ENCODE measurements at regions of chr7 and their contacts with region 1.

Region 1: DNA sequence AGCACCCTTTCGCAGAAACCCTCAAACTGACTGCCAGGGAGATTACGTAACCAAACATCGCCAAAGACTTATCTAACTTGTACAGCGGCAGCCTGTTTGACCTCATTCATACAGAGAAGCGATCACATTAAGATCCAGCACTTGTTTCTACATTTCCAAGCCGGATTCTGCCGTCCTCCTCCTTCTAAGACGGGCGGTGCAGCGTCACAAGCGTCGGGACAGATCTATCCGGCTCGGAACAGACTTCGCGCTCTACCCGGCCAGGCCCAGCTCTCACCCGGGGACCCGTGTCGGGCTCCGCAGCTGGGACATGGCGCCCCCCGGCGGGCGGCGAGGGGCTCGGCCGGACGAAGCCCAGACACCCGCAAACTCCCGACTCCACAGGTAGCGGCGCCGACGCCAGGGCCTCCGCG is 373 bp downstream of the H2AZ2 start:
- DNase-seq: peak; percentile 89 to 94 (median 94)
- ATAC-seq: peak; percentile 84
- H3K4me3 ChIP-seq: peak overlapping the region; percentile 61
- H3K4me1 ChIP-seq: peaks cover 8% of the 10 kb centered on the region
- CTCF ChIP-seq: peak; percentile 81

Region 2: DNA sequence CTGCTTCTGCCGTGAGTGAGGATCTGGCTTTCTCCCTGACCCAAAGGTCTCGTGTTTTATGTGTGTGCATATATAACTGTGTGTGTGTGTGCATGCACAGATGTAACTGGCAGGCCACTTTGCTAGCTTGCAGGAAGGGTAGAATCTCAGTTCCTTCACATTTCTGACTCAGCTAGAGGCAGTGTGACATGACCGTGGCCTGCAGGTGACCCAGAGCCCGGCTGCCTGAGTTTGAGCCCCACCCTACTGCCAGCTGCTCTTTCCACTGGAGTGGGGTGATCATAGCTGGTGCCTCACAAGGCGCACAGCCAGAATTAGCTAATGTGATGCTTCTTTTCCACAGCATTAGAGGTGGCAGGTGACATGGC is 697.1 kb before region 1 on chr7:
- intact Hi-C with region 1: no loop called
- DNase-seq: no peak
- ATAC-seq: no peak
- H3K4me3 ChIP-seq: no peak overlapping the region
- H3K4me1 ChIP-seq: no peaks in the 10 kb centered on the region
- CTCF ChIP-seq: no peak

Region 3: DNA sequence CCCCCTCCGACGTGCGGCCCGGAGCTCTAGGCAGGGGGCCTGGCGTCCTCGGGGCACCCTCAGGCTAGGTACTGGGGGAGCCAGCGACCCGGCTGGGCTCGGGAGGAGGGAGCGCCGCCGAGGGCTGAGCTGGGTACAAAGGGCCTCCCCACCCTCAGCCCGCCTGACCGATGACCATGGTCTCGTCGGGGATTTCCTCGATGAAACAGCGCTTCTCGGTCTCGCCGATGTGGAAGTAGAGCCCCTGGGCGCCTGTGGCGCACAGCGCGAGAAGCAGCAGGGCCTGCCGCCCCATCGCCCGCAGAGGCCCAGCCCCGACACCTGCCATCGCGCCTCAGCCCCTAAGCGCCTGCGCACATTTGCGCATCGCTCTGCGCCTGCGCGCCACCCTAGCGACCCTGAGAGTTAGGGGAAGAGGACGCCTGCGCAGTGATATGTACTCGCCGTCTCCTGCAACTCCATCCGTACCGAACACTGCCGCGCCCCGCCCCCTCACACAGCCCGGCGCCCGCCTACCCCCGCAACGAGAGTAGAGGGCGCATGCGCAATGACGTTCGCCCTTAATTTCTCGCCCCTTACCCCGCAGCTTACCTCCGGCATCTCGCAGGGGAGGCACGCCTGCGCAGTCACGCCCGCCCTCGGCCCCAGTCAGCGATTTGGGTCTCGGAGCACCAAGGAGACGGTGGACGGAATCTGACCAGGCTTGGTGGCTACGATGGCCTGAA is 265.5 kb before region 1 on chr7 and contains the start of gene TMED4:
- intact Hi-C with region 1: loop called in 1 of 2 experiments (anchors 10 kb)
- DNase-seq: peak; percentile 100
- ATAC-seq: peak; percentile 98
- H3K4me3 ChIP-seq: peak within 1 kb of the TSS; percentile 58
- H3K4me1 ChIP-seq: peaks cover 13% of the 10 kb centered on the region
- CTCF ChIP-seq: no peak
- total RNA-seq, gene TMED4: 76.7 to 93.3 (median 84.9) TPM

Measured in mucosa of descending colon (tissue), 3 donors.